ENCODE measurements at regions of chr2 and their contacts with region 1.

Region 1: DNA sequence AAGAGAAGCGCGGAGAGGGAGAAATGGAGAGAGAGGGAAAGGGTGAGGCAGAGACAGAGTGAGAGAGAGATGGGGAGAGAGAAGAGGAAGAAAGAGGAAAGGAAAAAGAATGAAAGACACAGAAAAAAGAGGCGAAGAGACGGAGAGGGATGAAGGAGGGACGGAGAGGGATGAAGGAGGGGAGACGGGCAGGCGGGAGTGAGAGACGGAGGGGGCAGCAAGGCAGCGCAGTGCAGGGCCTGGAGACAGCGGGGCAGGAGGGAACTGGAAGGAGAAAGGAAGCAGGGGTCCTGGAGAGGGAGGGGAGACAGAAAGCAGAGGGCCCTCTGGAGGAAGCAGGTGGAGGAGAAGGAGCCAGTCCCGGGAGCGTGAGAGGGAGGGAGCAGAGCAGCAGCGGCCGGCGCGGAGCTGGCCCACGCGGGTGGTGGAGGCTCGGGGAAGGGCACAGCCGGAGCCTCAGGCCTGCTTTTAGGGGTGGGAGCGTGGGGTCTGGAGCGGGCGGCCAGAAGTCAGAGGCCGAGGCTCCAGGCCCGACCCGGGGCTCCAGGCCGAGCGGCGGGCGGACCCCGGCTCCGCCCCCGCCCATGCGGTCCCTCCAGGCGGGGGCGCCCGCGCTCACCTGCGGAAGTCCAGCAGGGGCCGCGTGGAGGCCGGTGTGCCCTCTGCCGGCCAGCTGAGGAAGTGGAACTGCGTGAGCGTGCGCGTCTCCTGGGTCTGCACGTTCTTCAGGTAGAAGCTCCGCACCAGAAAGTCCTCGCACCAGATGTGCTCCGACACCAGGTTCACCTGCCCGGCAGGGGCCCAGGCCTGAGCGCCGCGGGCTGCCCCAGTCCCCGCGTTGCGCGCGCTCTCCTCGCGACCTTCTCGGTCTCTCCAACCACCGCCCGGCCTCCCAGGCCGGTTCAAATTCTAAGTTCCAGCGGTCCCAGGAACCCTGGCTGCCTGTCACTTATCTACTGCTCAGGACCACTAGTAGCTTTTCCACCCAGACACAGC is 14.5 kb downstream of the PTPRN start:
- DNase-seq: peak; percentile 84 to 91 (median 88)
- H3K4me3 ChIP-seq: peak overlapping the region; percentile 11 to 17
- H3K4me3 Mint-ChIP-seq: peak overlapping the region; percentile 59 to 84 (median 78)
- H3K27ac ChIP-seq: peak overlapping the region; percentile 33
- H3K27ac Mint-ChIP-seq: peak overlapping the region; percentile 70 to 94 (median 88)
- H3K4me1 ChIP-seq: peaks cover 12% of the 10 kb centered on the region
- H3K4me1 Mint-ChIP-seq: peaks cover 6 to 21% (median 11%) of the 10 kb centered on the region in 4 donors
- H3K27me3 ChIP-seq: no peaks in the 10 kb centered on the region
- H3K27me3 Mint-ChIP-seq: peaks cover 4 to 6% of the 10 kb centered on the region in 2 donors

Region 2: DNA sequence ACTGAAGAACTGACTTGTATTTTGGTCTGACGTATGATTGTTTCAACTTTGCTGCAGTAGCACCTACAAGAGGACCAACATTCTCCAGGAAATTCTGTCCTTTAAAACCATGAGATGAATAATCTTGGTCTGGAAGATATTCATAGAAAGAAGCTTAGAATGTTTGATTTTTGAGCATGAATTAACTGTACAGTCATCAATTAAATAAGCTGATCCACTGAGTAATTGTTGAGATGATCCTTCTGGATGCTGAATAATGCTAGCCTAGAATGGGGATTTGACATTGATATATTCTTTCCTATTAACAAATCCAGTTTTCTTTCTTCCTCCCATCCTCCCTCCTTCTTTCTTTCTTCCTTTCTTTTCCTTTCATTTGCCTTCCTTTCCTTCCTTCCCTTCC is 374.1 kb before region 1 on chr2:
- CTCF ChIA-PET with region 1: no interaction called
- POLR2A ChIA-PET with region 1: no interaction called
- intact Hi-C with region 1: no loop called
- DNase-seq: no peak
- H3K4me3 ChIP-seq: no peak overlapping the region
- H3K4me3 Mint-ChIP-seq: no peak overlapping the region
- H3K27ac ChIP-seq: no peak overlapping the region
- H3K27ac Mint-ChIP-seq: no peak overlapping the region
- H3K4me1 ChIP-seq: no peaks in the 10 kb centered on the region
- H3K4me1 Mint-ChIP-seq: no peaks in the 10 kb centered on the region
- H3K27me3 ChIP-seq: no peaks in the 10 kb centered on the region
- H3K27me3 Mint-ChIP-seq: peaks cover 14 to 33% of the 10 kb centered on the region in 2 donors

Region 3: GRCh38 chr2:219155054-219155644 is 139.5 kb before region 1 on chr2:
- CTCF ChIA-PET with region 1: interaction called, 79 read pairs
- POLR2A ChIA-PET with region 1: interaction called, 21 read pairs
- intact Hi-C with region 1: loop called (anchors 1 kb)
- DNase-seq: peak in 4 of 5 donors; percentile 50 to 62 (median 56)
- H3K4me3 ChIP-seq: no peak overlapping the region
- H3K4me3 Mint-ChIP-seq: no peak overlapping the region
- H3K27ac ChIP-seq: no peak overlapping the region
- H3K27ac Mint-ChIP-seq: no peak overlapping the region
- H3K4me1 ChIP-seq: peaks cover 6% of the 10 kb centered on the region
- H3K4me1 Mint-ChIP-seq: peaks cover 7 to 9% (median 8%) of the 10 kb centered on the region in 4 donors
- H3K27me3 ChIP-seq: no peaks in the 10 kb centered on the region
- H3K27me3 Mint-ChIP-seq: no peaks in the 10 kb centered on the region

Region 4: DNA sequence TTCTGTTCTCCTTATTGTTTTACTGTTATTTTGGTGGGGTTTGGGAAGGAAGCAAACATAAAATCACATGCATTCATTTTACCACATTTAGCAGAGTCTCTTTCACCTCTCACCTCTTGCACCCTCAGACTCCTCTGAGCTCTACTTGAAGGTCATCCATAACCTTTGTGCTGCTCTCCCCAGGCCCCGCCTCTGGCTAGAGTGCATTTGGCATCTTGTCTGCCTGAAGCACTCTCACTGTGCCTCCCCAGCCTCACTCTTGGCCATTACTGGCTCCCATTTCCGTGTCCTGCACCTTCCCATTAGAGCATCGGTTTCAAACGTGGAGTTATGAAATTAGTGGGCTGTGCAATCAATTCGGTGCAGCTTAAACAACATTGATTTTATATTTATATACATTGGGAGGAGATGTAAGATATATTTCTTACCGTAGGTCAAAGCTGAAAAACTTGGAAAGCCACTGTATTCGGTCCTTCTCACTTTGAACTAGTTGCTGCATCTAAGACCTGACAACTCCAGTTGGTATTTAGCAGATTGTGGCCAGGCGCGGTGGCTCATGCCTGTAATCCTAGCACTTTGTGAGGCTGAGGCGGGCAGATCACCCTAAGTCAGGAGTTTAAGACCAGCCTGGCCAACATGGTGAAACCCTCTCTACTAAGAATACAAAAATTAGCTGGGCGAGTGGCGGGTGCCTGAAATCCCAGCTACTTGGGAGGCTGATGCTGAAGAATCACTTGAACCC is 95.0 kb before region 1 on chr2:
- CTCF ChIA-PET with region 1: interaction called, 15 read pairs
- POLR2A ChIA-PET with region 1: no interaction called
- intact Hi-C with region 1: no loop called
- DNase-seq: no peak
- H3K4me3 ChIP-seq: no peak overlapping the region
- H3K4me3 Mint-ChIP-seq: no peak overlapping the region
- H3K27ac ChIP-seq: no peak overlapping the region
- H3K27ac Mint-ChIP-seq: peak overlapping the region in 1 of 7 donors; percentile 2
- H3K4me1 ChIP-seq: no peaks in the 10 kb centered on the region
- H3K4me1 Mint-ChIP-seq: peaks cover 2 to 8% (median 4%) of the 10 kb centered on the region in 4 donors
- H3K27me3 ChIP-seq: no peaks in the 10 kb centered on the region
- H3K27me3 Mint-ChIP-seq: peaks cover 5 to 8% of the 10 kb centered on the region in 2 donors

Region 5: DNA sequence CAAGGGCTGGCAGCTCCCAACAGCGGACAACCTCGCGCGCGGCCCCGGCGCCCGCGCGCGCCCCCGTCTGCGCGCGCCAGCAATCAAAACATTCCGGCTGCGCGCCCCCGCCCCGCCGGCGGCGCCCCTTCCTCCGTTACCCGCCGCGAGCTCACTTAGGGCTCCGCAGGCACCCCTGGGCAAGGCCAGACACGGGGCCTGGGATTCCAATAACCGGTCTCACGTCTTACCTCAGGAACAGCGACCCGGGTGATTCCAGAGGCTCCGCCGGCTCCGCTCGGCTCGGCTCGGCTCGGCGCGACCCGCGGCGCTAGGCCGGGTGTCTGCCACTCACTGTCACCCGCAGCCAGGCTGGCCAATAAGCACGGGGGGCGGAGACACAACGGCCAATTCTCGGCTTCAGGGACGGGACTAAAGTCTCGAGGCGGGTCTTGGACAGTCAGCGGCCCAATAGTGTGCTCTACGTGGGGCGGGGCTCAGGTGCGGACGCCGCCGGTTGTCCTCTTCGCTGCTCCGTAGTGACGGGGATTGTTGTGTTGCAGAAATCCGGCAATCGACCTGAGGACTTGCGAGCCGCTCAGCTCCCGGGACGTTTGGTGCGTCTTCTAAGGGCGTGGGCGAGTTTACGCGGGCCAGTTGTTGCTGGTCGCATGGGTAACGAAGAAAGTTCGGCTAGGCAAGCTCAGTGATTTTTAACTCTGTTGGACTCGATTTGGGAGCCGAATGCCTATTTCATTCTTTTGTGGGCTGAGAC is 65.2 kb before region 1 on chr2 and contains the starts of genes ANKZF1 and ATG9A:
- CTCF ChIA-PET with region 1: interaction called, 23 read pairs
- POLR2A ChIA-PET with region 1: interaction called, 32 read pairs
- intact Hi-C with region 1: loop called (anchors 1 kb)
- DNase-seq: peak; percentile 98 to 100 (median 99)
- H3K4me3 ChIP-seq: peak within 1 kb of the TSS; percentile 63 to 69
- H3K4me3 Mint-ChIP-seq: peak within 1 kb of the TSS; percentile 94 to 99 (median 96)
- H3K27ac ChIP-seq: peak within 1 kb of the TSS; percentile 87
- H3K27ac Mint-ChIP-seq: peak within 1 kb of the TSS; percentile 94 to 98 (median 96)
- H3K4me1 ChIP-seq: peaks cover 49% of the 10 kb centered on the region
- H3K4me1 Mint-ChIP-seq: peaks cover 28 to 82% (median 51%) of the 10 kb centered on the region in 4 donors
- H3K27me3 ChIP-seq: no peaks in the 10 kb centered on the region
- H3K27me3 Mint-ChIP-seq: no peaks in the 10 kb centered on the region
- total RNA-seq, gene ANKZF1: 244 to 260 TPM
- total RNA-seq, gene ATG9A: 48.7 to 53.0 TPM

Region 6: DNA sequence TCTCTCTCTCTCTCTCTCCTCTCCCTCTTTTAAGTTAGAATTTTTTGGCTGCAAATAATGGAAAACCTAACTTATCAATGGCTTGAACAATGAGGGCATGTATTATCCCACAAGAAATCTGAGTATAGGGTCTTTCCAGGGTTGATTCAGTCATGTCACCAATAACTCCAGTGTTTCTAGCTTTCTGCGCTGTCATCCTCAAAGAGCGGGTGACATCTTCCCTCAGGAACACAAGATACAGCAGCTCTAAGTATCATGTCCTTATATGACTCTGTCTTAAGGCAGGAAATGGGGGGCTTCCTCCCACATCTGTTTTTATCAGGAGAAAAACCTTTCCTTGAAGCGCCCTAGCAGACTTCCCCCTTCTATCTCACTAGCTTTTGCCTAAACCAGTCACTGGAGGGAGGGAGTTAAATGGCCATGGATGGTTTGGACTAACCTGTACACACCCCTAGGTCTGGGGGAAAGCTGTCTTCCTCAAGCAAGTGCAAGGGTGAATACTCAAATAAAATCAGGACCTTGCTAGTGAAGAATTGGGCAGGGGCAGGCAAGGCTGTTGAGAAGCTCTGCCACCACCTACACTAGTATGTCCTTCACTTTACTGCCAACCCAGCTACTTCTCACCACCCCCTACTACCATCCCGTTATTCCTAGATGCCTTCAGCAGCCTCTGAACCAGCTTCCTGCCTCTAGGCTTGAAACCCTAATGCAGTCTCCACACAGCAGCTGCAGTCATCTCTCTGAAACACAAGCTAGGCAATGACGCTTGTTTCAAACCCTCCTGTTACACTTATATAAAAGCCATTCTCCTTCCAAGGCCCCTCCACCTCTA is 33.4 kb before region 1 on chr2:
- CTCF ChIA-PET with region 1: interaction called, 150 read pairs
- POLR2A ChIA-PET with region 1: interaction called, 68 read pairs
- intact Hi-C with region 1: no loop called
- DNase-seq: no peak
- H3K4me3 ChIP-seq: no peak overlapping the region
- H3K4me3 Mint-ChIP-seq: no peak overlapping the region
- H3K27ac ChIP-seq: no peak overlapping the region
- H3K27ac Mint-ChIP-seq: no peak overlapping the region
- H3K4me1 ChIP-seq: no peaks in the 10 kb centered on the region
- H3K4me1 Mint-ChIP-seq: peaks cover 0 to 2% (median 2%) of the 10 kb centered on the region in 4 donors
- H3K27me3 ChIP-seq: no peaks in the 10 kb centered on the region
- H3K27me3 Mint-ChIP-seq: peaks cover 1 to 6% of the 10 kb centered on the region in 2 donors

Region 7: GRCh38 chr2:219552382-219553167 is 257.9 kb after region 1 on chr2:
- CTCF ChIA-PET with region 1: no interaction called
- POLR2A ChIA-PET with region 1: no interaction called
- intact Hi-C with region 1: no loop called
- DNase-seq: peak; percentile 70 to 79 (median 76)
- H3K4me3 ChIP-seq: peak overlapping the region; percentile 11 to 44
- H3K4me3 Mint-ChIP-seq: peak overlapping the region; percentile 51 to 86 (median 75)
- H3K27ac ChIP-seq: no peak overlapping the region
- H3K27ac Mint-ChIP-seq: peak overlapping the region in 2 of 7 donors; percentile 22 to 79
- H3K4me1 ChIP-seq: peaks cover 18% of the 10 kb centered on the region
- H3K4me1 Mint-ChIP-seq: peaks cover 5 to 18% (median 10%) of the 10 kb centered on the region in 4 donors
- H3K27me3 ChIP-seq: peaks cover 11% of the 10 kb centered on the region
- H3K27me3 Mint-ChIP-seq: peaks cover 25 to 52% of the 10 kb centered on the region in 2 donors